Activated B cell treated with CpG ODN at 0.5 μM for 24 hours (primary cell): ENCODE measurements at regions of chr1 and their contacts with region 1.

Region 1: GRCh38 chr1:11805447-11806306 is at the starts of genes CLCN6 and MTHFR:
- DNase-seq: peak; percentile 99
- ATAC-seq: peak; percentile 84
- H3K4me3 Mint-ChIP-seq: peak within 1 kb of the TSS; percentile 95
- H3K27ac Mint-ChIP-seq: peak within 1 kb of the TSS; percentile 97
- H3K4me1 Mint-ChIP-seq: peaks cover 78% of the 10 kb centered on the region
- H3K27me3 Mint-ChIP-seq: no peaks in the 10 kb centered on the region
- CTCF ChIP-seq: no peak
- total RNA-seq, gene CLCN6: 66.0 and 79.6 TPM in 2 replicates
- total RNA-seq, gene MTHFR: 54.1 and 56.9 TPM in 2 replicates

Region 2: GRCh38 chr1:10398734-10399623 is 1406.7 kb before region 1 on chr1 and contains the start of gene PGD:
- CTCF ChIA-PET with region 1: no interaction called
- POLR2A ChIA-PET with region 1: no interaction called
- intact Hi-C with region 1: loop called (anchors 5 kb)
- DNase-seq: peak; percentile 95
- ATAC-seq: peak; percentile 94
- H3K4me3 Mint-ChIP-seq: peak within 1 kb of the TSS; percentile 92
- H3K27ac Mint-ChIP-seq: peak within 1 kb of the TSS; percentile 87
- H3K4me1 Mint-ChIP-seq: peaks cover 22% of the 10 kb centered on the region
- H3K27me3 Mint-ChIP-seq: no peaks in the 10 kb centered on the region
- CTCF ChIP-seq: no peak
- total RNA-seq, gene PGD: 108 and 112 TPM in 2 replicates

Region 3: GRCh38 chr1:11272832-11273594 is 532.7 kb before region 1 on chr1 and contains the start of gene UBIAD1:
- CTCF ChIA-PET with region 1: no interaction called
- POLR2A ChIA-PET with region 1: interaction called, 3 read pairs
- intact Hi-C with region 1: loop called (anchors 1 kb)
- DNase-seq: peak; percentile 80
- ATAC-seq: peak; percentile 86
- H3K4me3 Mint-ChIP-seq: peak within 1 kb of the TSS; percentile 93
- H3K27ac Mint-ChIP-seq: peak within 1 kb of the TSS; percentile 96
- H3K4me1 Mint-ChIP-seq: peaks cover 35% of the 10 kb centered on the region
- H3K27me3 Mint-ChIP-seq: no peaks in the 10 kb centered on the region
- CTCF ChIP-seq: no peak
- total RNA-seq, gene UBIAD1: 23.3 and 27.8 TPM in 2 replicates

Region 4: GRCh38 chr1:11531314-11531870 is 274.3 kb before region 1 on chr1:
- CTCF ChIA-PET with region 1: no interaction called
- POLR2A ChIA-PET with region 1: no interaction called
- intact Hi-C with region 1: no loop called
- DNase-seq: no peak
- ATAC-seq: no peak
- H3K4me3 Mint-ChIP-seq: no peak overlapping the region
- H3K27ac Mint-ChIP-seq: no peak overlapping the region
- H3K4me1 Mint-ChIP-seq: no peaks in the 10 kb centered on the region
- H3K27me3 Mint-ChIP-seq: no peaks in the 10 kb centered on the region
- CTCF ChIP-seq: no peak

Region 5: GRCh38 chr1:11735854-11736745 is 69.6 kb before region 1 on chr1 and contains the start of gene AGTRAP:
- CTCF ChIA-PET with region 1: no interaction called
- POLR2A ChIA-PET with region 1: interaction called, 10 read pairs
- intact Hi-C with region 1: loop called (anchors 1 kb)
- DNase-seq: peak; percentile 80
- ATAC-seq: peak; percentile 88
- H3K4me3 Mint-ChIP-seq: peak within 1 kb of the TSS; percentile 93
- H3K27ac Mint-ChIP-seq: peak within 1 kb of the TSS; percentile 79
- H3K4me1 Mint-ChIP-seq: peaks cover 40% of the 10 kb centered on the region
- H3K27me3 Mint-ChIP-seq: no peaks in the 10 kb centered on the region
- CTCF ChIP-seq: no peak
- total RNA-seq, gene AGTRAP: 10.9 and 13.9 TPM in 2 replicates

Region 6: GRCh38 chr1:11925938-11926292 is 120.2 kb after region 1 on chr1:
- CTCF ChIA-PET with region 1: no interaction called
- POLR2A ChIA-PET with region 1: interaction called, 6 read pairs
- intact Hi-C with region 1: loop called (anchors 1 kb)
- DNase-seq: no peak
- ATAC-seq: peak; percentile 3
- H3K4me3 Mint-ChIP-seq: no peak overlapping the region
- H3K27ac Mint-ChIP-seq: no peak overlapping the region
- H3K4me1 Mint-ChIP-seq: peaks cover 42% of the 10 kb centered on the region
- H3K27me3 Mint-ChIP-seq: no peaks in the 10 kb centered on the region
- CTCF ChIP-seq: no peak